ENCODE measurements at regions of chrX and their contacts with region 1.

Region 1: GRCh38 chrX:86696951-86697350 is 548.7 kb downstream of the DACH2 start:
- DNase-seq: no peak
- H3K4me3 ChIP-seq: no peak overlapping the region
- H3K27ac ChIP-seq: no peak overlapping the region
- H3K4me1 ChIP-seq: no peaks in the 10 kb centered on the region
- H3K27me3 ChIP-seq: peaks cover 0 to 5% of the 10 kb centered on the region in 2 donors
- CTCF ChIP-seq: no peak
- POLR2A ChIP-seq: no peak

Region 2: DNA sequence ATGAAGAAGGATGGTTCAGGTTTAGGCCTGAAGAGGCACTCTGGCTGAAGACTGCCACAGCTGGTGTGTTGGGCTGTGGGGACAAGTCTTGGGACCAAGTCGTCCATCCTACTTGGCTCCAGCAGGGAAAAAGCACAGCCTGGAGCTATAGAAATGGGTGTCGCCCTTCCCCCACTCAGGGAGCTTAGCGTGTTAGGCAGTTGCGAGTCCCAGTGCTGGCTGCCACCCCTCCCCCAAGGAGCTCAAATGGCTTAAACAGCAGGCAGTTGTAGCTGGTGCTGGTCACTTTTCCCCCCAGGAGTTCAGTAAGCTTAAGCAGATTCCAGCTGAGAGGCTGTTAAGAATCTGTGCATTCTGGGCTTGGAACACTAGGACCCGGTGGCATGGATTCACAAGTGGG is 998.0 kb before region 1 on chrX:
- intact Hi-C with region 1: loop called (anchors 5 kb)
- DNase-seq: no peak
- H3K4me3 ChIP-seq: no peak overlapping the region
- H3K27ac ChIP-seq: no peak overlapping the region
- H3K4me1 ChIP-seq: no peaks in the 10 kb centered on the region
- H3K27me3 ChIP-seq: no peaks in the 10 kb centered on the region
- CTCF ChIP-seq: no peak
- POLR2A ChIP-seq: no peak

Region 3: DNA sequence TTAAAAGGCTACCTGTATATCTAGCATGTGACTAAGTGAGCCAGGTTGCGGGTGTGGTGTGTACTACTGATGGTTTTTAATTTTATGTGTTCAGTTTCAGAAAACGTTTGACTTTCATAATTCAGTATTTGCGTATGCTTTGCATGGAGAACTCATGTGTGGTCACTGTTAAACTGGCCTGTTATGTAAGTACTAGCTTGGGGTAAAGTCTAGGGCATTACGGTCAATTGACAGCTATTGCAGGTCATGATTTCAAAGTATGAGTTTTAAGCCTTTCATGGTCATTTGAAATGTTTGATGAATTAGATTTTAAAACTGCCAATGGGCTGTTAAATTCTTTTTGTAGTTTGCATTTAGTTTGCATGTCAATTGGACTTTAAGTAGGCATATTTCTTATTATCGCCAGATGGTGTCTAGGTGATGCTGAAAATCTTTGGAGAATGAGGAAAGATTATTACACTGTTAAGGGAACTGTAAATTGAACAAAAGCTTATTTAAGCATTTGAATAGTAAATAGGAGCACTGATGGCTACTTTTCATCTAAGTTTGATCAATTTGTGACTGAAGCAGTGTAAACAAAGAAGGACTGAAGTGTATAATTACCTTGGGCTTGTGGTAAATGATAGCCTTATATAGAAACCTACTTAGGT is 14.7 kb after region 1 on chrX:
- intact Hi-C with region 1: no loop called
- DNase-seq: no peak
- H3K4me3 ChIP-seq: no peak overlapping the region
- H3K27ac ChIP-seq: no peak overlapping the region
- H3K4me1 ChIP-seq: no peaks in the 10 kb centered on the region
- H3K27me3 ChIP-seq: no peaks in the 10 kb centered on the region
- CTCF ChIP-seq: no peak
- POLR2A ChIP-seq: no peak

Region 4: DNA sequence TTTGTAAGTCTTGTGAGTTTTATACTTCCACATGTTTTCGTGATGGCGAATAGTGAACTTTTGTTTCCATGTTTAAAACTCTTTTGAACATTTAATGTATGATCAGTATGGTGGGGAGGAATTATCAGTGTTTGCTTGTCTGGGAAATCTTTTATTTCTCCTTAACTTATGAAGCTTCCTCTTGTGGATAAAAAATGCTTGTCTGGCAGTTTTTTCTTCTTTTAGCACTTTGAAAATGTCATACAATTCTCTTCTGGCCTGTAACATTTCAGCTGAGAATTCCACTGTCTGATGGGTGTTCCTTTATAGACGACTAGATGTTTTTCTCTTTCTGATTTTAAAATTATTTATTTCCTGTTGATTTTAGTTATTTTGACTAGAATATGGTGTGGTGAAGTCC is 27.3 kb after region 1 on chrX:
- intact Hi-C with region 1: no loop called
- DNase-seq: no peak
- H3K4me3 ChIP-seq: no peak overlapping the region
- H3K27ac ChIP-seq: no peak overlapping the region
- H3K4me1 ChIP-seq: no peaks in the 10 kb centered on the region
- H3K27me3 ChIP-seq: peaks cover 0 to 21% of the 10 kb centered on the region in 2 donors
- CTCF ChIP-seq: no peak
- POLR2A ChIP-seq: no peak

Region 5: GRCh38 chrX:87636533-87636932 is 939.6 kb after region 1 on chrX:
- intact Hi-C with region 1: no loop called
- DNase-seq: no peak
- H3K4me3 ChIP-seq: no peak overlapping the region
- H3K27ac ChIP-seq: no peak overlapping the region
- H3K4me1 ChIP-seq: no peaks in the 10 kb centered on the region
- H3K27me3 ChIP-seq: peaks cover 0 to 29% of the 10 kb centered on the region in 2 donors
- CTCF ChIP-seq: no peak
- POLR2A ChIP-seq: no peak

Measured in breast epithelium (tissue), 4 donors.